Activated naive CD4-positive, alpha-beta T cell treated with anti-CD3 and anti-CD28 coated beads for 36 hours (primary cell): ENCODE measurements at regions of chrX and their contacts with region 1.

Region 1: DNA sequence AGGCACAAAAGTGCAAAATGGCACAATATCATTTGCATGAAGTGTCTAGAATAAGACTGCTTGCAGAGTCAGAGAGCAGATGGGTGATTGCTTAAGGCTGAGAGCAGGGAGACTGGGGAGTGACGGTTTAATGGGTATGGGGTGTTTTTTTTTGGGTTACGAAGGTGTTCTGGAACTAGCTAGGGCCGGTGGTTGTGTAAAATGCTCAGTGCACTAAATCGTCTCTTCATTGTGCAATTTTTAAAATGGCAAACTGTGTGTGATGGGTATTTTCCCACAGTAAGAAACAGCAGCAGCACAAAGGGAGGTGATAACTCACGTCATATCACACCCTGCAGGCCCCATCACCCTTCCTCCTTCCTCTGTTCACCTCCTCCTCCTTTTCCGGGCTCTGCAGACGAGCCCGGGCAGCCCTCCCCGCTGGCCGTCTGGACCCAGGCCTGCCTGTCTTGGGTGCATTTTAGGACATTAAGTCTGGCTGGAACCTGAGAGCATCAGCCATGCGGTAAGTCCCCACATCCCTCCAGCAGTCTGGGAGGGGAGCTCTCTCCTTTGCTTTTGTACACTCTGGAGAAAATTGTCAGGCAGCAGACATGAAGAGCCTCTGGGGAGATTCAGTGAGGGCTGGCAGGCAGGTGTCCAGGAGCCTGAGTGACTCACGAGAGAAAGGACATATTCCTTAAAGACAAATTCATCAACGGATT is 42.7 kb downstream of the ASMT start:
- DNase-seq: peak; percentile 87
- H3K4me3 Mint-ChIP-seq: peak overlapping the region; percentile 99
- H3K27ac Mint-ChIP-seq: peak overlapping the region; percentile 99
- H3K4me1 Mint-ChIP-seq: peaks cover 37% of the 10 kb centered on the region
- H3K27me3 Mint-ChIP-seq: no peaks in the 10 kb centered on the region

Region 2: DNA sequence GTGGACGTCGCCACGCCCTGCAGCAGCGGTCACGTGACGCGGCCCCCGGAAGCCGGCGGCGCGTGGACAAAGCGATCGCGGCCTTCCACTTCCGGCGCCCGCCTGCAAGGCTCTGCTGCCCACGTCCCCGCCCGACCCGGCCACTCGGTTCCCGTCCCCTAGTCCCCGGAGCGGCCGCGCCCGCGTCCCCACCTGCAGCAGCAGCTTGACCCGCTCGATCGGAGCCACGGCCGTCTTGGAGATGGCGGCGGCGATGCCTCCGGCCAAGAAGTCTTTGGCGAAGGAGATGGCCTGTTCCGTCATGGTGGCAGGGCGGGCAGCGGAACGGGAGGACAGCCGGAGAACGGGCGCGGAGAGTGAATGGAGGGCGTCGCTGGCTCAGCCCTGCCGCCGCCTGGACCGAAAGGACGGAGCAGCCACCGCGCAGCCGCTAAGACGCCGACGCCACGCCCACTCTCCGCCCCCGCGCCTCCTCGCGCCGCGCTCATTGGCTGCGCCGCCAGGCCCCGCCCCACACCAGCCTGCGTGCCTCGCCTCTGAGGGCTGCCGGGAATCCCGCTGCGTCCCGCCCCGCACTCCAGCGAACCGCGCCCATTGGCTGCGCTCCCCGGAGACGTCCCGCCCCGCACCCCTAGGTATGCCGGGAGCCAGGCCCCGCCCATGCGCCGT is 265.7 kb before region 1 on chrX and contains the start of gene SLC25A6:
- CTCF ChIA-PET with region 1: no interaction called
- intact Hi-C with region 1: loop called (anchors 1 kb)
- DNase-seq: peak; percentile 99
- H3K4me3 Mint-ChIP-seq: peak within 1 kb of the TSS; percentile 91
- H3K27ac Mint-ChIP-seq: peak within 1 kb of the TSS; percentile 90
- H3K4me1 Mint-ChIP-seq: peaks cover 63% of the 10 kb centered on the region
- H3K27me3 Mint-ChIP-seq: no peaks in the 10 kb centered on the region
- total RNA-seq, gene SLC25A6: 457 to 463 TPM

Region 3: DNA sequence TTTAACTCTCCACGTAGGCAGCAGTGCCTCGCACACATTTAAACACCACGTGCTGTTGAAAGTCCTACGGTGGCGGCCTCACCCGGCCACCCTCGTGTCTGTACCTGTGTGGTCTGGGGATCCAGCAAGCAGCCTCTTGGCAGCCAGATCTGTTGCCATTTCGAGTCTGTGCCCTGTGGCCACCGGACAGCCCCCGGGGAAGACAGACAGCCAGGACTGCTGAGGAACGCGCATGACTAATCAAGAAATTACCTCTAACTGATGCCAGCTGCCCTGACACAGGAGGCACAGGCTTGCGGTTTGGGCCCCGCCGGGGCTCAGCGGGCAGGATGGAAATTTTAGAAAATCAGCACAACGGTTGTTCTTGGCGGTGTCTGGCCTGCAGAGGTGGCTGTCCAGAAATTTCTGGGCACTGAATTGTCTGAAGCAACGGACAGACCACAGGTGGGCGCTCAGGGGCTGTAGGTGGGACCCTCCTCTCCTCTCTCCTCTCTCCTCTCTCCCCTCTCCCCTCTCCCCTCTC is 189.2 kb before region 1 on chrX:
- CTCF ChIA-PET with region 1: no interaction called
- intact Hi-C with region 1: no loop called
- DNase-seq: peak; percentile 93
- H3K4me3 Mint-ChIP-seq: peak overlapping the region; percentile 60
- H3K27ac Mint-ChIP-seq: peak overlapping the region; percentile 77
- H3K4me1 Mint-ChIP-seq: peaks cover 80% of the 10 kb centered on the region
- H3K27me3 Mint-ChIP-seq: no peaks in the 10 kb centered on the region

Region 4: GRCh38 chrX:1521459-1521956 is 136.0 kb before region 1 on chrX:
- CTCF ChIA-PET with region 1: no interaction called
- intact Hi-C with region 1: no loop called
- DNase-seq: peak; percentile 85
- H3K4me3 Mint-ChIP-seq: peak overlapping the region; percentile 74
- H3K27ac Mint-ChIP-seq: peak overlapping the region; percentile 75
- H3K4me1 Mint-ChIP-seq: peaks cover 51% of the 10 kb centered on the region
- H3K27me3 Mint-ChIP-seq: no peaks in the 10 kb centered on the region

Region 5: GRCh38 chrX:1679238-1679637 is 21.7 kb after region 1 on chrX:
- CTCF ChIA-PET with region 1: no interaction called
- intact Hi-C with region 1: loop called (anchors 1 kb)
- DNase-seq: peak; percentile 61
- H3K4me3 Mint-ChIP-seq: no peak overlapping the region
- H3K27ac Mint-ChIP-seq: peak overlapping the region; percentile 58
- H3K4me1 Mint-ChIP-seq: peaks cover 30% of the 10 kb centered on the region
- H3K27me3 Mint-ChIP-seq: no peaks in the 10 kb centered on the region

Region 6: DNA sequence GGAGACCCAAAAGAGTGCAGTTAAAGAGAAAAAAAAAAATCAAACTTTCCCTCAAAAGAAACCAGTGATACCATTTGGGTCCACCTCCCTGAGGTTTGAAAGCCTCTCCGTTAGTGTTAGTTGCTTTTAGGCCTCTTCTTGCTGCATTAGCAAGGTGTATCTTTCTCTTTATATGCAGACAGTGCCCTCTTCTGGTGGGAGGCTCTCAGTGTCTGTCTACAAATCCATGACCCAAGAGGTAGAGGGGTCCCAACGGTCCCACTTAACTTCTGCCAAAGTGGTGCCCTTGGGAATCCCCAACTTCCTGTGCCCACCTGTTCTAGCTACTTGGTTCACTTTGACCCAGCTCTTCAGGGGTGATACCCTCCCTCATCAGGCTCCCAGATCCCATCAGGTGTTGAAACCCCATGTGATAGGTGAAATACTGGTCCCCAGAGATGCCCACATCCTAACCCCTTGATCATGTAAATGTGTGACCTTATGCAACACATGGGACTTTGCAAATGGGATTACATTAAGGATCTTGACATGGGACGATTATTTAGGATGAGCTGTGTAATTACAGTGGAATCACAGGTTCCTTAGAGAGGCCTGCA is 969.9 kb after region 1 on chrX:
- CTCF ChIA-PET with region 1: no interaction called
- intact Hi-C with region 1: loop called (anchors 1 kb)
- DNase-seq: peak; percentile 74
- H3K4me3 Mint-ChIP-seq: no peak overlapping the region
- H3K27ac Mint-ChIP-seq: peak overlapping the region; percentile 27
- H3K4me1 Mint-ChIP-seq: peaks cover 40% of the 10 kb centered on the region
- H3K27me3 Mint-ChIP-seq: no peaks in the 10 kb centered on the region

Region 7: DNA sequence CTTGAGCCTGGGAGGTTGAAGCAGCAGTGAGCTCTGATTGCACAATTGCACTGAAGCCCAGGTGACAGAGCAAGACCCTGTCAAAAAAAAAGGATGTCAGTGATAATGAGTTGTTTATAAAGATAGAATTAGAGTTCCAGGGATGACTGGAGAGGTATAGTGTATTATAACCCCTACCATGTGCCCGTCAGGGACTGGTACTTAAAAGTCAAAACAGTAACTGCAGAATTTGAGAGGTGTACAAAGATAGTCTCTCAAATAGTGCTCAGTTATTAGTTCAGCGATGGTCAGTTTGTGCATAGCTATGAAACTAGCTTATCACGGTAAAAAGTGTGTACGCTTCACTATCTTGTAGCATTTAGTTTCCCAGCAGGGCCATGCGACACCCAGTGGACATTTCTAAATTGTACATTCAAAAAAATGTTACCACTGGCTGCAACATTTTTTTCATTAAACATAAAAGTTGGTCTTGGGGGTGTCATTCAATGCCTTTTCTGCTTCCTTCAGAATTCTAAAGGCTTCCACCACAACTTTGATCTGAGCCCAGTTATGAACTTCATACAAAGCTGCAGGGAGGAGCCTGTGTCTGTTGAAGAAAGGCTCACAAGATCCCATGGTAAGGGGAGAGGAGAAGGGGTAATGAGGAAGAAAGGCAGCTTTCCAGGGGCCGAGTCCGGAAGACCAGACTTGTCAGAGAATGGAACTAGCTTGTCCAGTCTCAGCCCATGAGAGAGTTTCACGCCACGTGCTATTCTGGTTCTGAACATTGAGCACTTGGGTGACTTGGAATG is 1162.0 kb after region 1 on chrX:
- CTCF ChIA-PET with region 1: no interaction called
- intact Hi-C with region 1: loop called (anchors 10 kb)
- DNase-seq: no peak
- H3K4me3 Mint-ChIP-seq: no peak overlapping the region
- H3K27ac Mint-ChIP-seq: no peak overlapping the region
- H3K4me1 Mint-ChIP-seq: no peaks in the 10 kb centered on the region
- H3K27me3 Mint-ChIP-seq: peaks cover 2% of the 10 kb centered on the region